ENCODE measurements at regions of chr4 and their contacts with region 1.

Region 1: GRCh38 chr4:70505151-70505748 is 13.1 kb upstream of the AMTN start:
- DNase-seq: peak; percentile 59
- ATAC-seq: peak; percentile 69
- H3K4me3 Mint-ChIP-seq: no peak overlapping the region
- H3K27ac Mint-ChIP-seq: no peak overlapping the region
- H3K4me1 Mint-ChIP-seq: no peaks in the 10 kb centered on the region
- H3K27me3 Mint-ChIP-seq: peaks cover 1% of the 10 kb centered on the region
- CTCF ChIP-seq: peak; percentile 94

Region 2: DNA sequence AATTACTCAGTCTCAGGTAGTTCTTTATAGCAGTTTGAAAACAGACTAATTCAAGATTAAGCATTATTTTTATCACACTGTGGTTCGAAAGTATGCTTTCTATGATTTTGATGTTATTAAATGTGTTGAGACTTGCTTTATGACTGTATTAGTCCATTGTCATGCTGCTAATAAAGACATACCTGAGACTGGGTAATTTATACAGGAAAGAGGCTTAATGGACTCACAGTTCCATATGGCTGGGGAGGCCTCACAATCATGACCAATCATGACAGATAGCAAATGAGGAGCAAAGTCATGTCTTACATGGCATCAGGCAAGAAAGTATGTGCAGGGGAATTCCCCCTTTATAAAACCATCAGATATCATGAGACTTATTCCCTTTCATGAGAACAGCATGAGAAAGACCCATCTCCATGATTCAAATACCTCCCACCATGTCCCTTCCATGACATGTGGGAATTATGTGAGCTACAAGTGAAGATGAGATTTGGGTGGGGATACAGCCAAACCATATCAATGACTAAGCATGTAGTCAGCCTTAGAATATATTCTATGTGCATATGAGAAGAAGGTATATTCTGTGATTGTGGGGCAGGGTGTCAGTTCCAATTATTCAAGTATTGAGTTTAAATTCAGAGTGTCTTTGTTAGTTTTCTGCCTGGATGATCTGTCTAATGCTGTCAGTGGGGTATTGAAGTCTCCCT is 807.6 kb before region 1 on chr4:
- CTCF ChIA-PET with region 1: no interaction called
- POLR2A ChIA-PET with region 1: no interaction called
- intact Hi-C with region 1: loop called (anchors 10 kb)
- DNase-seq: no peak
- ATAC-seq: no peak
- H3K4me3 Mint-ChIP-seq: no peak overlapping the region
- H3K27ac Mint-ChIP-seq: no peak overlapping the region
- H3K4me1 Mint-ChIP-seq: no peaks in the 10 kb centered on the region
- H3K27me3 Mint-ChIP-seq: no peaks in the 10 kb centered on the region
- CTCF ChIP-seq: no peak

Region 3: GRCh38 chr4:70183168-70183939 is 321.9 kb before region 1 on chr4:
- CTCF ChIA-PET with region 1: interaction called, 3 read pairs
- POLR2A ChIA-PET with region 1: no interaction called
- intact Hi-C with region 1: loop called (anchors 10 kb)
- DNase-seq: peak; percentile 21
- ATAC-seq: peak; percentile 56
- H3K4me3 Mint-ChIP-seq: no peak overlapping the region
- H3K27ac Mint-ChIP-seq: no peak overlapping the region
- H3K4me1 Mint-ChIP-seq: no peaks in the 10 kb centered on the region
- H3K27me3 Mint-ChIP-seq: no peaks in the 10 kb centered on the region
- CTCF ChIP-seq: peak; percentile 68

Region 4: GRCh38 chr4:70463335-70463734 is 41.9 kb before region 1 on chr4:
- CTCF ChIA-PET with region 1: no interaction called
- POLR2A ChIA-PET with region 1: no interaction called
- intact Hi-C with region 1: no loop called
- DNase-seq: no peak
- ATAC-seq: no peak
- H3K4me3 Mint-ChIP-seq: no peak overlapping the region
- H3K27ac Mint-ChIP-seq: no peak overlapping the region
- H3K4me1 Mint-ChIP-seq: no peaks in the 10 kb centered on the region
- H3K27me3 Mint-ChIP-seq: no peaks in the 10 kb centered on the region
- CTCF ChIP-seq: no peak

Measured in activated CD8-positive, alpha-beta T cell treated with anti-CD3 and anti-CD28 coated beads for 36 hours (primary cell).